Activated CD8-positive, alpha-beta memory T cell treated with anti-CD3 and anti-CD28 coated beads, Interleukin-2, amount 10 ng/mL, durations not matched to agents 7 days and 5 days (primary cell): ENCODE measurements at regions of chr18 and their contacts with region 1.

Region 1: GRCh38 chr18:63325086-63325686 is 5.6 kb upstream of the BCL2 start:
- DNase-seq: no peak
- ATAC-seq: no peak
- H3K4me3 Mint-ChIP-seq: no peak overlapping the region
- H3K27ac Mint-ChIP-seq: no peak overlapping the region
- H3K4me1 Mint-ChIP-seq: peaks cover 18% of the 10 kb centered on the region
- H3K27me3 Mint-ChIP-seq: no peaks in the 10 kb centered on the region

Region 2: DNA sequence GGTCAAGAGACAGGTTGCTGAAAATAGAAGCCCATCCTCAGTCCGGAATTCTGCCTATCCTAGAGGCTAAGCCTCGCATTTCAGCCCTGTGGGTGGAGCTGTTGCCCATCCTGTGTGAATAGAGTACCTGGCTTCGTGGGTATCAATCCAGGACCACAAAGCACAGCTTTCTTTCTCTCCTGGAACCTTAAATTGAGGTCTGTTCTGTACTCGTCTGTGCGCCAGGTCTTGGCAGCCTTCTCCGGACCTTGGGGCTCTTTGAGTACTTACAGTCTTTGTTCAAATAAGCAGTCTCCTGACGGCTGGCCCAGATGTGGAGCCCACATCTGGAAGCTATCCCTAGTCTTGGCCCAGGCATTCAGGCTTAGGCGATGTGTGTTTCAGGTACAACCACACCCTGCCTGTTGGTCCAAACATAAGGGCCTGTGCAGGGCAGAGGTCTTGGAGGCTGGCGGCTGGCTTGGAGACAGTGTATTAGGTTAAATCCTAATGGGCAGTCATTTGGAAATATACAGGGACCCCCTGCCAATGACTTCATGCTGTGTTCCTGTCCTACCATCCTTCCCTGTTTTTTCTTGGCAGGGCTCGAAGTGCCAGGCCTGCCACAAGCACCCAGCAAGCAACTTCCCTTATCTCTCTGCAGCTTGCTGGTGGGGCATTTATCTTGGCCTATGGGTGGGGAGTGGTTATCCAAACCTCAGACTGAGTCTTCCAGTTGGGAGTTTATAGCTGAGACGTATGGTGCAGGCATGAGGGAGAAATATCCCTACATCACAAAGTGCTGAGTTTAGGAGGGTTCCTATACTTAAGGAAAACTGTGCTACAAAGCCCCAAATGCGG is 299.7 kb before region 1 on chr18:
- CTCF ChIA-PET with region 1: interaction called, 15 read pairs
- DNase-seq: no peak
- ATAC-seq: no peak
- H3K4me3 Mint-ChIP-seq: no peak overlapping the region
- H3K27ac Mint-ChIP-seq: no peak overlapping the region
- H3K4me1 Mint-ChIP-seq: no peaks in the 10 kb centered on the region
- H3K27me3 Mint-ChIP-seq: peaks cover 17% of the 10 kb centered on the region

Region 3: GRCh38 chr18:63476666-63477065 is 151.5 kb after region 1 on chr18 and contains the start of gene SERPINB5:
- CTCF ChIA-PET with region 1: no interaction called
- DNase-seq: no peak
- ATAC-seq: no peak
- H3K4me3 Mint-ChIP-seq: no peak within 1 kb of the TSS
- H3K27ac Mint-ChIP-seq: no peak within 1 kb of the TSS
- H3K4me1 Mint-ChIP-seq: no peaks in the 10 kb centered on the region
- H3K27me3 Mint-ChIP-seq: peaks cover 53% of the 10 kb centered on the region
- total RNA-seq, gene SERPINB5: not detected